Gastrocnemius medialis (tissue), 4 donors: ENCODE measurements at regions of chr1 and their contacts with region 1.

Region 1: GRCh38 chr1:184483101-184483683 is 96.4 kb downstream of the C1orf21 start:
- DNase-seq: peak; percentile 88 to 94
- ATAC-seq: peak; percentile 86 to 88
- H3K4me3 ChIP-seq: no peak overlapping the region
- H3K27ac ChIP-seq: peak overlapping the region; percentile 90 to 96 (median 91)
- H3K4me1 ChIP-seq: peaks cover 84 to 88% of the 10 kb centered on the region in 2 donors
- H3K27me3 ChIP-seq: no peaks in the 10 kb centered on the region
- CTCF ChIP-seq: peak in 2 of 5 experiments; percentile 20 to 21
- POLR2A ChIP-seq: peak in 1 of 2 donors; percentile 15

Region 2: DNA sequence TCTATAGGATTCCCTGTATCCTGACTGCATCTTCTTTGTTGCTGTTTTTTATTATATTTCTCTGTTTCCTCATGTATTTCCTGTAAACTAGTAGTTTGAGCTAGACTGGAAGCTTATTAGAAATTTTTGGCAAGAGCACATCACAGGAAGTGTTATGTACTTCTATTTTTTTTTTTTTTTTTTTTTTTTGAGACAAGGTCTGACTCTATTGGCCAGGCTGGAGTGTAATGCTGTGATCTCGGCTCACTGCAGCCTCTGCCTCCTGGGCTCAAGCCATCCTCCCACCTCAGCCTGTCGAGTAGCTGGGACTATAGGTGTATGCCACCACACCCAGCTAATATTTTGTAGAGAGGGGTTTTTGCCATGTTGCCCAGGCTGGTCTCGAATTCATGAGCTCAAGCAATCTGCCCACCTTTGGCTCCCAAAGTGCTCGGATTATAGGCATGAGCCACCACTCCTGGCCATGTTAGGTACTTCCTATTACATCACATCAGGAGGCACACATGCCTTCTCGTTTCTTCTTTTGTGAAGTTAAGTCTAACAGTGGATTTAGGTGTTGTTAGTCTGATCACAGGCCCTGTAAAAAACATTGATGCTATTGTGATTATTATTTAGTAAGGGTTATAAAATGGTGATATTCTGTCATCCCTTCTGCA is 83.9 kb before region 1 on chr1:
- in situ Hi-C with region 1: loop called in 2 of 4 experiments (anchors 10 to 25 kb)
- intact Hi-C with region 1: no loop called
- DNase-seq: no peak
- ATAC-seq: peak; percentile 14 to 68
- H3K4me3 ChIP-seq: peak overlapping the region in 1 of 4 donors; percentile 2
- H3K27ac ChIP-seq: peak overlapping the region; percentile 60 to 98 (median 66)
- H3K4me1 ChIP-seq: peaks cover 77 to 83% of the 10 kb centered on the region in 2 donors
- H3K27me3 ChIP-seq: no peaks in the 10 kb centered on the region
- CTCF ChIP-seq: no peak
- POLR2A ChIP-seq: no peak

Region 3: GRCh38 chr1:184535191-184535970 is 52.2 kb after region 1 on chr1:
- in situ Hi-C with region 1: no loop called
- intact Hi-C with region 1: loop called (anchors 2 kb)
- DNase-seq: no peak
- ATAC-seq: peak; percentile 59 to 74
- H3K4me3 ChIP-seq: no peak overlapping the region
- H3K27ac ChIP-seq: peak overlapping the region; percentile 72 to 96 (median 90)
- H3K4me1 ChIP-seq: peaks cover 55 to 58% of the 10 kb centered on the region in 2 donors
- H3K27me3 ChIP-seq: no peaks in the 10 kb centered on the region
- CTCF ChIP-seq: no peak
- POLR2A ChIP-seq: peak in 1 of 2 donors; percentile 30

Region 4: GRCh38 chr1:184622136-184622823 is 139.1 kb after region 1 on chr1:
- in situ Hi-C with region 1: loop called in 1 of 4 experiments (anchors 10 kb)
- intact Hi-C with region 1: loop called (anchors 5 kb)
- DNase-seq: peak; percentile 90 to 92
- ATAC-seq: peak; percentile 79 to 83
- H3K4me3 ChIP-seq: no peak overlapping the region
- H3K27ac ChIP-seq: peak overlapping the region; percentile 87 to 97 (median 88)
- H3K4me1 ChIP-seq: peaks cover 74 to 84% of the 10 kb centered on the region in 2 donors
- H3K27me3 ChIP-seq: no peaks in the 10 kb centered on the region
- CTCF ChIP-seq: no peak
- POLR2A ChIP-seq: peak; percentile 22 to 61

Region 5: GRCh38 chr1:184637664-184638240 is 154.6 kb after region 1 on chr1:
- in situ Hi-C with region 1: no loop called
- intact Hi-C with region 1: no loop called
- DNase-seq: no peak
- ATAC-seq: no peak
- H3K4me3 ChIP-seq: no peak overlapping the region
- H3K27ac ChIP-seq: no peak overlapping the region
- H3K4me1 ChIP-seq: peaks cover 13 to 16% of the 10 kb centered on the region in 2 donors
- H3K27me3 ChIP-seq: no peaks in the 10 kb centered on the region
- CTCF ChIP-seq: no peak
- POLR2A ChIP-seq: no peak

Region 6: GRCh38 chr1:184649451-184649888 is 166.3 kb after region 1 on chr1:
- in situ Hi-C with region 1: loop called in 1 of 4 experiments (anchors 25 kb)
- intact Hi-C with region 1: loop called (anchors 5 kb)
- DNase-seq: no peak
- ATAC-seq: peak; percentile 90 to 93
- H3K4me3 ChIP-seq: peak overlapping the region in 2 of 4 donors; percentile 16 to 23
- H3K27ac ChIP-seq: peak overlapping the region; percentile 72 to 83 (median 74)
- H3K4me1 ChIP-seq: peaks cover 21% of the 10 kb centered on the region in 2 donors
- H3K27me3 ChIP-seq: no peaks in the 10 kb centered on the region
- CTCF ChIP-seq: no peak
- POLR2A ChIP-seq: no peak

Region 7: GRCh38 chr1:185229981-185230380 is 746.8 kb after region 1 on chr1:
- in situ Hi-C with region 1: no loop called
- intact Hi-C with region 1: no loop called
- DNase-seq: no peak
- ATAC-seq: no peak
- H3K4me3 ChIP-seq: no peak overlapping the region
- H3K27ac ChIP-seq: no peak overlapping the region
- H3K4me1 ChIP-seq: no peaks in the 10 kb centered on the region
- H3K27me3 ChIP-seq: no peaks in the 10 kb centered on the region
- CTCF ChIP-seq: no peak
- POLR2A ChIP-seq: no peak